ENCODE measurements at regions of chr13 and their contacts with region 1.

Region 1: GRCh38 chr13:111153279-111153976 is 38.3 kb downstream of the ARHGEF7 start:
- DNase-seq: peak; percentile 96
- H3K4me3 ChIP-seq: peak overlapping the region; percentile 80 to 97 (median 90)
- H3K27ac ChIP-seq: peak overlapping the region; percentile 71
- H3K4me1 ChIP-seq: peaks cover 15% of the 10 kb centered on the region
- H3K27me3 ChIP-seq: peaks cover 6 to 17% of the 10 kb centered on the region in 2 experiments
- CTCF ChIP-seq: peak; percentile 21 to 31
- POLR2A ChIP-seq: peak; percentile 52

Region 2: DNA sequence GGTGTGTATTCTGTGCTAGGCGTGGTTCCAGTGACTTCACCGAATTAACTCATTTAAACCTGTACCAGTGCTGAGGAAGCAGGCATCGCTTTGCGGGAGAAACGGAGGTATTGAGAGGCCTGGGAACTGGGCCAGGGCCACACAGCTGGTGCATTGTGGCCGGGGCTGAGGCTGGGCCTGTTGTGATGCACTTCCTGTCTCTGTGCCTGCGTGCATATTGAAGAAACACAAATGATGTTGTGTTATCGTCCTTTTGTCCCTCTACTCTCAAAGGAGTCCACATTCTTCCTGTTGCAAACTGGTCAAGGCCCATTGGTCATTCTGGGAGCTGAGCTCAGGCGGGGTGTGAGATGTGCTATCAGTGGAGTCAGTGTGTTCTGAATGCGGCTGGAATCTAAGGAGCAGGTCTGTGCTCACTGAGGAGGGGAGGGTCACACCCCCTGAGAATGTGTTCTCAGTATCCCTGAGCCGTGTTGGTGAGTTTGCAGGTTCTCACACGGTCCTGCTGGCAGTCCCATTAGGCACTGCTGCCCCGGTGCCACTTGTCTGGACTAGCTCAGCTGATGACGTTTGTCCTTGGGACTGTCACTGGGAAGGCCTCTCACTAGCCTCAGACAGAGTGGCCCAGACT is 23.8 kb after region 1 on chr13:
- CTCF ChIA-PET with region 1: interaction called, 4 read pairs
- POLR2A ChIA-PET with region 1: no interaction called
- dilution Hi-C with region 1: no loop called
- intact Hi-C with region 1: loop called (anchors 1 kb)
- DNase-seq: peak; percentile 95
- H3K4me3 ChIP-seq: no peak overlapping the region
- H3K27ac ChIP-seq: peak overlapping the region; percentile 98
- H3K4me1 ChIP-seq: peaks cover 25% of the 10 kb centered on the region
- H3K27me3 ChIP-seq: no peaks in the 10 kb centered on the region
- CTCF ChIP-seq: no peak
- POLR2A ChIP-seq: peak; percentile 35

Region 3: DNA sequence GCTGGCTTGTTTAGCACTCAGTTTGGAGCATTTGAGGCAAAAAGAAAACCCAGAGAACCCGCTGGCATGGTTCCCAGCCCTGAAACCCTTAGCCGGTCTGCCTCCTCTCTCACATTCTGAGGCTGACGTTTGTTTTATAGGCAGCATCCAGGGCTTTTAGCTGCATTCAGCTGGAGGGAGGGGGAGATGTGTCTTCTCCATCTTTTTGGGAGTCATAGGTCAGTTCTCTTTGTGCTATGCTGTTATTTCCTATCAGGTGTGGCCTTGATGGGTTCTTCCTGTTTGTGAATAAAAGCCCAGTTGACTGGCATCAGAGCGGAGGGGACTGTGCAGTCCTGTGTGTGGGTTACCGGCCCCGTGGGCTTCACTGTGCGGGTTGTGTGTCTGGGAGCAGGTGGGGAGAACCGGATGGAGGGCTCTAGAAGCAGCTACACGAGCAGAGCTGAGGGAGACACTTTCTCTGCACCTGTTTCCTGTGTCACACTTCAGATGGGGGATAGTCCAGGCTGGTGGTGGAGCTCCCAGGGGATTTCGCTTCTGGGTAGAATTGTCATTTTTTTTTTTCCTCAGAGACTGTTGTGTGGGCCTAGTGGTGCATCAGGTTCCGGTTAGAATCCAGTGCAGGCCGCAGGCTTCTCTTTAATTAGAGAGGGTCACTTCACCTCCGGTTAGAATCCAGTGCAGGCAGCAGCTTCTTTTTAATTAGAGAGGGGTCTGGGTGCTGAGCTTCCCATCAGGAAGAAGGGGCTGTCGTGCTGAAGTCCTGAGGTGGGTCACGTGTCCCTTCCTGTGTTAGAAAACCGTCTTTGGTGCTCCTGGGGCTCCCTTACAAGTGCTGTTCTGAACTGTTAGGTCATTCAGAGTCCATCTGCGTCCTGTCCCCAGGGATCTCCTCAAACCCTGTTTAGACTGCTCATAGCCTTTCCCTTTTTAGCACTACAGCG is 31.3 kb after region 1 on chr13:
- CTCF ChIA-PET with region 1: interaction called, 3 read pairs
- POLR2A ChIA-PET with region 1: no interaction called
- dilution Hi-C with region 1: no loop called
- intact Hi-C with region 1: loop called (anchors 2 kb)
- DNase-seq: no peak
- H3K4me3 ChIP-seq: no peak overlapping the region
- H3K27ac ChIP-seq: no peak overlapping the region
- H3K4me1 ChIP-seq: peaks cover 9% of the 10 kb centered on the region
- H3K27me3 ChIP-seq: no peaks in the 10 kb centered on the region
- CTCF ChIP-seq: no peak
- POLR2A ChIP-seq: no peak

Region 4: GRCh38 chr13:111216166-111216960 is 62.9 kb after region 1 on chr13:
- CTCF ChIA-PET with region 1: interaction called, 9 read pairs
- POLR2A ChIA-PET with region 1: no interaction called
- dilution Hi-C with region 1: no loop called
- intact Hi-C with region 1: loop called (anchors 1 kb)
- DNase-seq: no peak
- H3K4me3 ChIP-seq: no peak overlapping the region
- H3K27ac ChIP-seq: no peak overlapping the region
- H3K4me1 ChIP-seq: peaks cover 11% of the 10 kb centered on the region
- H3K27me3 ChIP-seq: no peaks in the 10 kb centered on the region
- CTCF ChIP-seq: peak; percentile 11 to 54
- POLR2A ChIP-seq: no peak

Region 5: GRCh38 chr13:111505175-111505777 is 351.8 kb after region 1 on chr13:
- CTCF ChIA-PET with region 1: no interaction called
- POLR2A ChIA-PET with region 1: no interaction called
- dilution Hi-C with region 1: no loop called
- intact Hi-C with region 1: no loop called
- DNase-seq: no peak
- H3K4me3 ChIP-seq: no peak overlapping the region
- H3K27ac ChIP-seq: no peak overlapping the region
- H3K4me1 ChIP-seq: no peaks in the 10 kb centered on the region
- H3K27me3 ChIP-seq: no peaks in the 10 kb centered on the region
- CTCF ChIP-seq: no peak
- POLR2A ChIP-seq: no peak